GM12878 (cell line): ENCODE measurements at regions of chr2 and their contacts with region 1.

Region 1: GRCh38 chr2:24315669-24316068 is 44.7 kb downstream of the ITSN2 start:
- DNase-seq: peak; percentile 70
- ATAC-seq: peak; percentile 83
- H3K4me3 ChIP-seq: 0 out of 2 replicates have a peak overlapping the region, but pooled peaks have one; percentile 11
- H3K27ac ChIP-seq: peak overlapping the region; percentile 69
- H3K4me1 ChIP-seq: peaks cover 35% of the 10 kb centered on the region
- H3K27me3 ChIP-seq: no peaks in the 10 kb centered on the region
- CTCF ChIP-seq: no peak
- EP300 ChIP-seq: peak; percentile 58 to 67; a peak in 3 of 4 replicates
- POLR2A ChIP-seq: no peak
- RAD21 ChIP-seq: no peak

Region 2: GRCh38 chr2:24110660-24111303 is 204.9 kb before region 1 on chr2:
- CTCF ChIA-PET with region 1: no interaction called
- POLR2A ChIA-PET with region 1: no interaction called
- RAD21 ChIA-PET with region 1: no interaction called
- SMC1A ChIA-PET with region 1: no interaction called
- in situ Hi-C with region 1: no loop called
- intact Hi-C with region 1: no loop called
- DNase-seq: no peak
- ATAC-seq: no peak
- H3K4me3 ChIP-seq: no peak overlapping the region
- H3K27ac ChIP-seq: no peak overlapping the region
- H3K4me1 ChIP-seq: no peaks in the 10 kb centered on the region
- H3K27me3 ChIP-seq: no peaks in the 10 kb centered on the region
- CTCF ChIP-seq: no peak
- EP300 ChIP-seq: no peak
- POLR2A ChIP-seq: no peak
- RAD21 ChIP-seq: no peak

Region 3: GRCh38 chr2:24329700-24330099 is 14.0 kb after region 1 on chr2:
- CTCF ChIA-PET with region 1: interaction called, 14 read pairs
- POLR2A ChIA-PET with region 1: interaction called, 35 read pairs
- RAD21 ChIA-PET with region 1: interaction called, 55 read pairs
- SMC1A ChIA-PET with region 1: interaction called, 68 read pairs
- in situ Hi-C with region 1: no loop called
- intact Hi-C with region 1: no loop called
- DNase-seq: no peak
- ATAC-seq: peak; percentile 66
- H3K4me3 ChIP-seq: peak overlapping the region; percentile 66
- H3K27ac ChIP-seq: peak overlapping the region; percentile 92
- H3K4me1 ChIP-seq: peaks cover 36% of the 10 kb centered on the region
- H3K27me3 ChIP-seq: no peaks in the 10 kb centered on the region
- CTCF ChIP-seq: no peak
- EP300 ChIP-seq: peak in 1 of 2 experiments; percentile 68; a peak in 1 of 4 replicates
- POLR2A ChIP-seq: no peak
- RAD21 ChIP-seq: no peak

Region 4: GRCh38 chr2:24342110-24342910 is 26.6 kb after region 1 on chr2:
- CTCF ChIA-PET with region 1: interaction called, 15 read pairs
- POLR2A ChIA-PET with region 1: interaction called, 14 read pairs
- RAD21 ChIA-PET with region 1: interaction called, 14 read pairs
- SMC1A ChIA-PET with region 1: interaction called, 18 read pairs
- in situ Hi-C with region 1: no loop called
- intact Hi-C with region 1: loop called (anchors 2 kb)
- DNase-seq: peak; percentile 68
- ATAC-seq: peak; percentile 81
- H3K4me3 ChIP-seq: peak overlapping the region; percentile 9; the same call in 1 of the 2 replicates
- H3K27ac ChIP-seq: peak overlapping the region; percentile 71
- H3K4me1 ChIP-seq: peaks cover 40% of the 10 kb centered on the region
- H3K27me3 ChIP-seq: no peaks in the 10 kb centered on the region
- CTCF ChIP-seq: peak in 2 of 3 experiments; percentile 12 to 40; a peak in 2 of 6 replicates
- EP300 ChIP-seq: peak in 1 of 2 experiments; percentile 22; a peak in 1 of 4 replicates
- POLR2A ChIP-seq: peak; percentile 50; the same call in 1 of the 2 replicates
- RAD21 ChIP-seq: peak; percentile 47; the same call in 1 of the 2 replicates

Region 5: DNA sequence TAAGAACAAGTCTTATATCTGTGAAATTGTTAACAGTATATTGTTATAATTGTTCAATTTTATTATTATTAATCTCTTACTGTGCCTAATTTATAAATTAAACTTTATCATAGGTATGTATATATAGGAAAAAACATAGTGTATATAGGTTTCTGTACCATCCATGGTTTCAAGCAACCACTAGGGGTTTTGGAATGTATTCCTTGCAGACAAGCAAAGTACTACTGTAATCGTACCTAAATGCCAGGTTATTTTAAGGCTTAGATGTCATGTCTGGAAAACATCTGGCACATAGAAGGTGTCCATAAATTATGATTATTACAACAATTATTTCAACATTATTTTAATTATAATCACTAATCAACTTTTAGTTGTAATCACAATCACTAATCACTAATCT is 36.3 kb after region 1 on chr2:
- CTCF ChIA-PET with region 1: interaction called, 6 read pairs
- POLR2A ChIA-PET with region 1: interaction called, 5 read pairs
- RAD21 ChIA-PET with region 1: interaction called, 10 read pairs
- SMC1A ChIA-PET with region 1: interaction called, 14 read pairs
- in situ Hi-C with region 1: no loop called
- intact Hi-C with region 1: loop called (anchors 2 kb)
- DNase-seq: no peak
- ATAC-seq: 0 out of 3 replicates have a peak, but pooled peaks have one; percentile 10
- H3K4me3 ChIP-seq: no peak overlapping the region
- H3K27ac ChIP-seq: no peak overlapping the region; the same call in 1 of the 2 replicates
- H3K4me1 ChIP-seq: peaks cover 29% of the 10 kb centered on the region
- H3K27me3 ChIP-seq: no peaks in the 10 kb centered on the region
- CTCF ChIP-seq: peak in 2 of 3 experiments; percentile 12 to 19; a peak in 2 of 6 replicates
- EP300 ChIP-seq: no peak
- POLR2A ChIP-seq: no peak
- RAD21 ChIP-seq: no peak

Region 6: DNA sequence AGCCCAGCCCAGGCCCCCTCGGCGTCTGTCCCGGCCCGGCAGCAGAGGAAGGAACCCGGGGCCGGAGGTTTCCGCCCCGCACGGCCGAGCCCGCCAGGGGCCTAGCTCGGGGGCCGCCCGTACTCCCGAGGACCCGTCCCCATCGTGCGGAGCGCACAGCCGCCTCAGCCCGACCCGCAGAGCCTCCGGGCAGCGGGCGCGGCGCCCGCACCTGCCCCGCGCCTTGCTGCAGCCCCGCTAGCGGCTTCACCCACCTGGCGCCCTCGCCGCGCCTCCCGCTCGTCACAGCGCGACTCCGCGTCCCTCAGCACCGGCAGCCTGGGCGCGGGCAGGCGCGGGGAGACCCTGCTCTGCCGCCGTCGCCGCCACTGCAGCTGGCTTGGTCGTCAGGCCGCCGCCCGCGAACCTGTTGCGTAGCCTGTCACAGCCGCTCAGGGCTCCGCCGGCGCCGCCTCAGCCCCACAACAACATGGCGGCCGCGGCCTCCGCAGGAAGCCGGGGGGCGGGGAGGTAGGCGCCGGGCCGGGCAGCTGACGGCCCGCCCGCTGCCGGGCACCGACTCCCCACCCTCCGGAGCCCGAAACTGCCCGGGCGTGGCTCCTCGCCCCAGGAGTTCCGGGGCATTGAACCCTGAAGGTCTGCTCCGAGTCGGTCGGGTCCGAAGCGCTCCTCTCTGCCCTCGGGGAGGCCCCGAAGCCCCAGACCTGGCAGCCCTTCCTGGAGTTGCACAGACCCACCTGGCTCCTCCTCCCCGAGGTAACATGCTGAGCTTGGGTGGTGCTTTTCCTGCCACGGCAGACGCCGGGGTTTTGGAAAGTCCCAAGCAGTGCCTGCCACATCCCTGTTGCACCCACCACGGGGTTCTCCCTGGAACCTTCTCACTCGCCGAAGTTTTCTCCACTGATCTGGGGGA is 44.6 kb after region 1 on chr2 and contains the start of gene ITSN2:
- CTCF ChIA-PET with region 1: interaction called, 8 read pairs
- POLR2A ChIA-PET with region 1: interaction called, 19 read pairs
- RAD21 ChIA-PET with region 1: interaction called, 9 read pairs
- SMC1A ChIA-PET with region 1: interaction called, 14 read pairs
- in situ Hi-C with region 1: no loop called
- intact Hi-C with region 1: loop called (anchors 2 kb)
- DNase-seq: peak; percentile 68
- ATAC-seq: peak; percentile 90
- H3K4me3 ChIP-seq: peak within 1 kb of the TSS; percentile 79
- H3K27ac ChIP-seq: peak within 1 kb of the TSS; percentile 93
- H3K4me1 ChIP-seq: peaks cover 10% of the 10 kb centered on the region
- H3K27me3 ChIP-seq: no peaks in the 10 kb centered on the region
- CTCF ChIP-seq: no peak
- EP300 ChIP-seq: no peak
- POLR2A ChIP-seq: peak; percentile 89
- RAD21 ChIP-seq: no peak
- polyA plus RNA-seq, gene ITSN2: 20.5 to 24.3 TPM

Region 7: GRCh38 chr2:24382363-24383073 is 66.8 kb after region 1 on chr2:
- CTCF ChIA-PET with region 1: interaction called, 3 read pairs
- POLR2A ChIA-PET with region 1: interaction called, 3 read pairs
- RAD21 ChIA-PET with region 1: interaction called, 3 read pairs
- SMC1A ChIA-PET with region 1: no interaction called
- in situ Hi-C with region 1: no loop called
- intact Hi-C with region 1: loop called (anchors 5 kb)
- DNase-seq: no peak
- ATAC-seq: peak; percentile 98
- H3K4me3 ChIP-seq: no peak overlapping the region
- H3K27ac ChIP-seq: no peak overlapping the region
- H3K4me1 ChIP-seq: no peaks in the 10 kb centered on the region
- H3K27me3 ChIP-seq: no peaks in the 10 kb centered on the region
- CTCF ChIP-seq: peak; percentile 70 to 85 (median 72)
- EP300 ChIP-seq: no peak
- POLR2A ChIP-seq: no peak
- RAD21 ChIP-seq: peak; percentile 97